ENCODE measurements at regions of chr7 and their contacts with region 1.

Region 1: DNA sequence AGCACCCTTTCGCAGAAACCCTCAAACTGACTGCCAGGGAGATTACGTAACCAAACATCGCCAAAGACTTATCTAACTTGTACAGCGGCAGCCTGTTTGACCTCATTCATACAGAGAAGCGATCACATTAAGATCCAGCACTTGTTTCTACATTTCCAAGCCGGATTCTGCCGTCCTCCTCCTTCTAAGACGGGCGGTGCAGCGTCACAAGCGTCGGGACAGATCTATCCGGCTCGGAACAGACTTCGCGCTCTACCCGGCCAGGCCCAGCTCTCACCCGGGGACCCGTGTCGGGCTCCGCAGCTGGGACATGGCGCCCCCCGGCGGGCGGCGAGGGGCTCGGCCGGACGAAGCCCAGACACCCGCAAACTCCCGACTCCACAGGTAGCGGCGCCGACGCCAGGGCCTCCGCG is 373 bp downstream of the H2AZ2 start:
- DNase-seq: peak; percentile 93
- H3K4me3 ChIP-seq: peak overlapping the region; percentile 97
- H3K27ac ChIP-seq: peak overlapping the region; percentile 77
- H3K4me1 ChIP-seq: peaks cover 11% of the 10 kb centered on the region
- H3K27me3 ChIP-seq: no peaks in the 10 kb centered on the region

Region 2: GRCh38 chr7:44595934-44596635 is 251.4 kb before region 1 on chr7:
- in situ Hi-C with region 1: loop called (anchors 10 kb)
- DNase-seq: no peak
- H3K4me3 ChIP-seq: no peak overlapping the region
- H3K27ac ChIP-seq: no peak overlapping the region
- H3K4me1 ChIP-seq: no peaks in the 10 kb centered on the region
- H3K27me3 ChIP-seq: no peaks in the 10 kb centered on the region

Region 3: DNA sequence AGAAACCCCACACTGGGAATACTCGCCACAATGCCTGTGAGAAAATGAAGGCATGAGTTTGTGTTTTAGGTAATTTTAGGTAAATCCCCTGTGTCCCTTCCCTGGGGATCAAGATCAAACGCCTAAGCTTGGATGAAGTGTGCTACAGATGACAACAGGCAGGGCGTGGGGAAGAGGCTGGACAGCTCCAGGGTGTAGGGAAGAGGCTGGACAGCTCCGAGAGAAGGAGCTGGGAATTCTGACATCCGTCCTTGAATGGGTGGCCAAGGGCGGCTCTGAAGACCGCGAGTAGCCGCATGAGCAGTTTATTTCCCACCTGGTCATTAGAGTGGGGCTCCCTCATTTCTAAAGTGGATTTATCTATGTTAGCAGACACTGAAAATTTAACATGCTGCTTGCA is 419.8 kb after region 1 on chr7:
- in situ Hi-C with region 1: no loop called
- DNase-seq: peak; percentile 23
- H3K4me3 ChIP-seq: no peak overlapping the region
- H3K27ac ChIP-seq: no peak overlapping the region
- H3K4me1 ChIP-seq: no peaks in the 10 kb centered on the region
- H3K27me3 ChIP-seq: peaks cover 10% of the 10 kb centered on the region